SK-N-SH (cell line): ENCODE measurements at regions of chr10 and their contacts with region 1.

Region 1: DNA sequence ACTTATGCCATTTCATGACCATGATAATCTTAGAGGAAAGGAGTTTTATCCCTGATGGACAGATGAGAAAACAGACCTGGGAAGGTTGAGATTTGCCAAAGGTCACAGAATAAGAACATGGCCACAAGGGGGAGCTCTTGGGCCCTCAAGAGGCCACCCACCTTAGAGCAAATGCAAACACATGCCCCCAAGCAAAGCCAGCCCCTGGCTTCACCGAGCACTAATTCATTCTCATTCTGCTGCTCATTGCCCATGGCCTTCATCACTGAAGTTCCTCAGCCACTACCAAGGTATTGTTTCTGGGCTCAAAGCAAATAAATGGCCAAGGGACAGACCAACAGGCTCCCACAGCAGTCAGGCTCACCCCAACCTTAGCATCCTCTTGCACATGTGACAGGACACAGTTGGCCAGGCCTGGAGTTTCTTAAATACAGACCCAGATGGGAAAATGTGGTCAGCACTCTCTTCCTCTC is 44.2 kb downstream of the PDLIM1 start:
- DNase-seq: peak; percentile 68
- H3K4me3 ChIP-seq: no peak overlapping the region
- H3K27ac ChIP-seq: peak overlapping the region in 1 of 2 experiments; percentile 84; a peak in 2 of 4 replicates
- H3K4me1 ChIP-seq: peaks cover 2 to 8% of the 10 kb centered on the region in 2 experiments; a peak in 3 of 4 replicates
- H3K27me3 ChIP-seq: no peaks in the 10 kb centered on the region
- CTCF ChIP-seq: peak; percentile 88
- EP300 ChIP-seq: no peak
- RAD21 ChIP-seq: peak; percentile 86

Region 2: DNA sequence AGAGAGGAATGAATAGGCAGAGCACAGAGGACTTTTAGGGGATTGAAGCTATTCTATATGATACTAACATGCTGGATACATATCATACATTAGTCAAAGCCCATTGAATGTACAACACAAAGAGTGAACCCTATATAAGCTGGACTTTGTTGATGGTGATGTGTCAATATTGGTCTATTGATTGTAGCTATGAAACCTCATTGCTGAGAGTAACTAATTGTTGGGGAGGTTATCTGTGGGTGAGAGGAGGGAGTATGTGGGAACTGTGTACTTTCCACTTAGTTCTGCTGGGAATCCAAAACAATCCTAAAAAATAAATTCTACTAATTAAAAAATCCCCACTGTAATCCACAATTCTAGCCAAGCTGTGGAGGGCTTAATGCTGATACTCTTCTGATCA is 330.2 kb before region 1 on chr10:
- CTCF ChIA-PET with region 1: no interaction called
- POLR2A ChIA-PET with region 1: no interaction called
- DNase-seq: no peak
- H3K4me3 ChIP-seq: no peak overlapping the region
- H3K27ac ChIP-seq: no peak overlapping the region
- H3K4me1 ChIP-seq: no peaks in the 10 kb centered on the region
- H3K27me3 ChIP-seq: no peaks in the 10 kb centered on the region
- CTCF ChIP-seq: no peak
- EP300 ChIP-seq: no peak
- RAD21 ChIP-seq: no peak

Region 3: DNA sequence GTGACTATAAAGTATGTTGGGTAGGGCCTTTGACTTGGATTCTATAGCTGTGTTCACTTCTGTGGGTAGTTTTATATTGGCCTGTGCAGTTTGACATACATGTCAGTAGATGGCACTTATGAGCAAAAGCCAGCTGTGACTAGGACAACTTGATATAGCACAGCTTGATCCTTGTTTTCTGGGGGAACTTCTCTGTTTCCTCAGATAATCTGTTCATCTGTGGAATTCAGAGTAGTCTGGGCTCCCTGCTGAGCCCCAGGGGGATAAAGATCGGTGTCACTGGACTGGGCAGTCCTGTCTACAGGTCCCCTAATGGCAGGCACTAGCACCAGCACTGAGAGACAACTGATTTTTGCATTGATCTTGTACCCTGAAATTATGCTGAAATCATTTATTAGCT is 282.7 kb before region 1 on chr10:
- CTCF ChIA-PET with region 1: interaction called, 12 read pairs
- POLR2A ChIA-PET with region 1: no interaction called
- DNase-seq: peak; percentile 7
- H3K4me3 ChIP-seq: no peak overlapping the region; a peak in 1 of 4 replicates
- H3K27ac ChIP-seq: no peak overlapping the region
- H3K4me1 ChIP-seq: no peaks in the 10 kb centered on the region
- H3K27me3 ChIP-seq: no peaks in the 10 kb centered on the region
- CTCF ChIP-seq: peak; percentile 62
- EP300 ChIP-seq: no peak
- RAD21 ChIP-seq: peak; percentile 49

Region 4: GRCh38 chr10:95183271-95184230 is 63.1 kb before region 1 on chr10:
- CTCF ChIA-PET with region 1: interaction called, 23 read pairs
- POLR2A ChIA-PET with region 1: no interaction called
- DNase-seq: peak; percentile 96
- H3K4me3 ChIP-seq: peak overlapping the region; percentile 70 to 75
- H3K27ac ChIP-seq: peak overlapping the region; percentile 44 to 67; a peak in 3 of 4 replicates
- H3K4me1 ChIP-seq: no peaks in the 10 kb centered on the region; a peak in 1 of 4 replicates
- H3K27me3 ChIP-seq: no peaks in the 10 kb centered on the region
- CTCF ChIP-seq: peak; percentile 87
- EP300 ChIP-seq: 0 out of 4 replicates have a peak, but pooled peaks of 1 of the 2 experiments have one; percentile 48
- RAD21 ChIP-seq: peak; percentile 64

Region 5: GRCh38 chr10:95260397-95260881 is 13.8 kb after region 1 on chr10:
- CTCF ChIA-PET with region 1: interaction called, 17 read pairs
- POLR2A ChIA-PET with region 1: no interaction called
- DNase-seq: no peak
- H3K4me3 ChIP-seq: peak overlapping the region in 1 of 2 experiments; percentile 42; a peak in 1 of 4 replicates
- H3K27ac ChIP-seq: peak overlapping the region; percentile 41 to 98; a peak in 3 of 4 replicates
- H3K4me1 ChIP-seq: peaks cover 0 to 24% of the 10 kb centered on the region in 2 experiments; a peak in 3 of 4 replicates
- H3K27me3 ChIP-seq: no peaks in the 10 kb centered on the region
- CTCF ChIP-seq: no peak
- EP300 ChIP-seq: peak in 1 of 2 experiments; percentile 42; a peak in 1 of 4 replicates
- RAD21 ChIP-seq: no peak

Region 6: DNA sequence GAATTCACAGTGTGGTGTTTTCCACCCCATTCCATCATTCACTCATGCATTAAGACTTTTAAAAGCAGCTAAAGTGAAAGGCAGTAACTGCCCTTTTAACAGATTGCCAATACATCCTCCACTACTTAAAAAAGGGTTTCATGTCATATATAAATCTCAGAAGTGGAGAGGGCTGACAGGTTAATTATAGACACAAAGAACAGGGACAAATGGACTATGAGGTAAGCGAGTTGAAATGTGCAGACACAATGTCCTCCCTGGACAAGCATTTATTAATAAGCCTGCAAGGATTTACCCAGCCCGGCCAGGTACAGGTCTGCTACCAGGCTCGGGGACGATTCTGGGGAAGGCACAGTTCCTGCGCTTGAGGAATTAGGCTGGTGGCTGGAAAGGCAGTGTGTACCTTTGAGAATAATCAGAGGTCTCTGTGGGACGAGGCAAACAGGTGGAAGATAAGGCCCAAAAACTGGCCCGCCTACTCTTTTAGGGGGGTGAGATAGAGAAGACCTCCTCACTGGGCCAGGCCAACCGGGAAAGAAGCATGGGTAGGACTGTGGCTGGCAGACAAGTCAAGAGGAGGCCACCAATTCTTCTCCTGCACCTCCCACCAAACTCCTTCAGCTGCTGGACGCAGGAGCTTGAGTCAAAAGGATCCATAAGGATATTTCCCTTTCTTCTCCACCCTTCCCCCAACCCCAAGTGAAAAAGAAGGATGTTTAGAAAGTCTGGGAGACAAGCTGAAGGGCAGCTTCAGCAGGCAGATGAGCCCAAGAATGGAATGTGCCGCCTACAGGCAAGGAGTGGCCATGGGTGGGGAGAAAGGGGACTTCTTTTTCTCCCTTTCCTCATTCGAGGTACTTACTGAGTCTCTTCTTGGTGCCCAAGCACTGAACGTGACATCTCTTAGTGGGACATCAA is 42.6 kb after region 1 on chr10:
- CTCF ChIA-PET with region 1: interaction called, 14 read pairs
- POLR2A ChIA-PET with region 1: no interaction called
- DNase-seq: no peak
- H3K4me3 ChIP-seq: peak overlapping the region; percentile 85 to 94; a peak in 3 of 4 replicates
- H3K27ac ChIP-seq: no peak overlapping the region
- H3K4me1 ChIP-seq: peaks cover 3 to 4% of the 10 kb centered on the region in 2 experiments; a peak in 1 of 4 replicates
- H3K27me3 ChIP-seq: no peaks in the 10 kb centered on the region
- CTCF ChIP-seq: 0 out of 2 replicates have a peak, but pooled peaks have one; percentile 15
- EP300 ChIP-seq: no peak
- RAD21 ChIP-seq: no peak

Region 7: GRCh38 chr10:95363303-95363912 is 116.8 kb after region 1 on chr10:
- CTCF ChIA-PET with region 1: interaction called, 404 read pairs
- POLR2A ChIA-PET with region 1: no interaction called
- DNase-seq: peak; percentile 70
- H3K4me3 ChIP-seq: no peak overlapping the region; a peak in 1 of 4 replicates
- H3K27ac ChIP-seq: no peak overlapping the region
- H3K4me1 ChIP-seq: no peaks in the 10 kb centered on the region
- H3K27me3 ChIP-seq: no peaks in the 10 kb centered on the region
- CTCF ChIP-seq: peak; percentile 96
- EP300 ChIP-seq: no peak
- RAD21 ChIP-seq: peak; percentile 98